ENCODE measurements at regions of chr10 and their contacts with region 1.

Region 1: GRCh38 chr10:118594392-118595063 is 920 bp downstream of the PRLHR start:
- DNase-seq: peak; percentile 94
- ATAC-seq: peak; percentile 88
- H3K4me3 Mint-ChIP-seq: peak overlapping the region; percentile 82
- H3K27ac Mint-ChIP-seq: no peak overlapping the region
- H3K4me1 Mint-ChIP-seq: peaks cover 21% of the 10 kb centered on the region
- H3K27me3 Mint-ChIP-seq: peaks cover 56% of the 10 kb centered on the region
- CTCF ChIP-seq: peak; percentile 54; the same call in 1 of the 2 replicates

Region 2: DNA sequence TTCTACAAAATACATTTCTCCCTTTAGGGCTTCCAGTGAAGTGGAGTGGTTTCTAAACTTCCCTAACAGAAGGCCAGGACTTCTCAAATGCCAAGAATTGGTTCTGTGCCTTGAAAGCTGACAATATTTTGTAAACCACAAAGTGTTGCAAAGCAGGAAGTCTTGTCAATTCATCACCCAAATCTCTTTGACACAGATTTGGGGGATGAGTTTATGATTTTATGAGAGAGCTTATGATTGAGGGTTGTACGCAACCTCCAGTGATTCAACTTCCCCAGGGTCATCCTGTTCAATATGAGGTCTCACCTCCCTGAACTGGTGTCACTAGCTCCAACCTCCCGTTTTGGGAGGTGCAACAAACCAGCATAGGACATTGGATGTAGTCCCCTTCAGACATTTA is 82.8 kb before region 1 on chr10:
- CTCF ChIA-PET with region 1: no interaction called
- POLR2A ChIA-PET with region 1: no interaction called
- DNase-seq: no peak
- ATAC-seq: no peak
- H3K4me3 Mint-ChIP-seq: no peak overlapping the region
- H3K27ac Mint-ChIP-seq: no peak overlapping the region
- H3K4me1 Mint-ChIP-seq: peaks cover 2% of the 10 kb centered on the region
- H3K27me3 Mint-ChIP-seq: no peaks in the 10 kb centered on the region; the same call in 1 of the 2 replicates
- CTCF ChIP-seq: no peak

Region 3: GRCh38 chr10:118610577-118610976 is 16.0 kb after region 1 on chr10:
- CTCF ChIA-PET with region 1: interaction called, 11 read pairs
- POLR2A ChIA-PET with region 1: no interaction called
- DNase-seq: no peak
- ATAC-seq: no peak
- H3K4me3 Mint-ChIP-seq: no peak overlapping the region
- H3K27ac Mint-ChIP-seq: no peak overlapping the region
- H3K4me1 Mint-ChIP-seq: 0 out of 2 replicates have a peak, but pooled peaks cover 3% of the 10 kb centered on the region
- H3K27me3 Mint-ChIP-seq: peaks cover 6% of the 10 kb centered on the region
- CTCF ChIP-seq: no peak

Region 4: DNA sequence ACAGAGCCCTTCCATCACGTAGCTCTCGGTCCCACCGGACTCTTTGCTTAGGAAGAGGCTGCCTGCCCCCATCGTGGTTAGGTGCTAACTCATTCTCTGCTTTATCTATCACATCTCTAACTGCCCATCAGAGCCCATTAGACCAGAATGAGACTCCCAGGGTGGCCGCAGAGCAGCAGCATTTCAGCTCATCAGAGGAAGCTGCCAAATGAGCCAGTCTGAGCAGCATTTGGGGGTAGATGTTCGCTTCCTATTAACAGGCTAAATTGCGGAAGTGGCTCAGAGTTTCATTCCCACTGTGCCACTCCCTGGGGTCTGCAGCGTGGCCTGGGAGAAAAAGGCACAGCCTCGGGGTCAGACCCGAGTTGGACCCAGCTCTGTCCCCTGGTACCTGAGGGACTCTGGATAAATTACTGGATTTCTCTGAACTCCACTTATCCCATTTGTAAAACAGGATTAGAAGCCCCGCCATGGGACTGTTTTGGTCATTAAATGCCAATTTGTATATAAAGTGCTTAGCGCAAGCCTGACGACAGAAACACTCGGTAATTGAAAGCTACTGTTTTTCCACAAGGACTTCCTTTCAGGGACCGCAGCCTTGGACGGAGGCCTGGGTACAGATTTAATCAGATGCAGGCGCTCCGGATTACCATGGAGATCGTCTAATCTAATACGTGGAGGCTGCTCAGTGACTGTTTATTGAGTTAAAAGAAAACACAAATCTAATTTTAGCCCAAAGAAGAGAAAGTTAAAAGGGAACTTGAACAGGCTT is 74.7 kb after region 1 on chr10:
- CTCF ChIA-PET with region 1: interaction called, 53 read pairs
- POLR2A ChIA-PET with region 1: no interaction called
- DNase-seq: no peak
- ATAC-seq: no peak
- H3K4me3 Mint-ChIP-seq: no peak overlapping the region
- H3K27ac Mint-ChIP-seq: no peak overlapping the region
- H3K4me1 Mint-ChIP-seq: peaks cover 6% of the 10 kb centered on the region; the same call in 1 of the 2 replicates
- H3K27me3 Mint-ChIP-seq: no peaks in the 10 kb centered on the region
- CTCF ChIP-seq: no peak

Region 5: GRCh38 chr10:118720685-118721538 is 126.4 kb after region 1 on chr10:
- CTCF ChIA-PET with region 1: interaction called, 36 read pairs
- POLR2A ChIA-PET with region 1: no interaction called
- DNase-seq: peak; percentile 47
- ATAC-seq: peak; percentile 32; the same call in 1 of the 2 replicates
- H3K4me3 Mint-ChIP-seq: no peak overlapping the region
- H3K27ac Mint-ChIP-seq: no peak overlapping the region
- H3K4me1 Mint-ChIP-seq: no peaks in the 10 kb centered on the region
- H3K27me3 Mint-ChIP-seq: no peaks in the 10 kb centered on the region
- CTCF ChIP-seq: peak; percentile 71

Region 6: GRCh38 chr10:118754720-118755480 is 160.4 kb after region 1 on chr10 and contains the start of gene CACUL1:
- CTCF ChIA-PET with region 1: interaction called, 19 read pairs
- POLR2A ChIA-PET with region 1: interaction called, 5 read pairs
- DNase-seq: peak; percentile 100
- ATAC-seq: peak; percentile 98
- H3K4me3 Mint-ChIP-seq: peak within 1 kb of the TSS; percentile 93
- H3K27ac Mint-ChIP-seq: peak within 1 kb of the TSS; percentile 97
- H3K4me1 Mint-ChIP-seq: peaks cover 20% of the 10 kb centered on the region
- H3K27me3 Mint-ChIP-seq: peaks cover 17% of the 10 kb centered on the region
- CTCF ChIP-seq: no peak
- total RNA-seq, gene CACUL1: 37.1 to 41.5 TPM (median 38.4 TPM) in 3 replicates

Measured in WTC11 (cell line).